ENCODE measurements at regions of chr2 and their contacts with region 1.

Region 1: DNA sequence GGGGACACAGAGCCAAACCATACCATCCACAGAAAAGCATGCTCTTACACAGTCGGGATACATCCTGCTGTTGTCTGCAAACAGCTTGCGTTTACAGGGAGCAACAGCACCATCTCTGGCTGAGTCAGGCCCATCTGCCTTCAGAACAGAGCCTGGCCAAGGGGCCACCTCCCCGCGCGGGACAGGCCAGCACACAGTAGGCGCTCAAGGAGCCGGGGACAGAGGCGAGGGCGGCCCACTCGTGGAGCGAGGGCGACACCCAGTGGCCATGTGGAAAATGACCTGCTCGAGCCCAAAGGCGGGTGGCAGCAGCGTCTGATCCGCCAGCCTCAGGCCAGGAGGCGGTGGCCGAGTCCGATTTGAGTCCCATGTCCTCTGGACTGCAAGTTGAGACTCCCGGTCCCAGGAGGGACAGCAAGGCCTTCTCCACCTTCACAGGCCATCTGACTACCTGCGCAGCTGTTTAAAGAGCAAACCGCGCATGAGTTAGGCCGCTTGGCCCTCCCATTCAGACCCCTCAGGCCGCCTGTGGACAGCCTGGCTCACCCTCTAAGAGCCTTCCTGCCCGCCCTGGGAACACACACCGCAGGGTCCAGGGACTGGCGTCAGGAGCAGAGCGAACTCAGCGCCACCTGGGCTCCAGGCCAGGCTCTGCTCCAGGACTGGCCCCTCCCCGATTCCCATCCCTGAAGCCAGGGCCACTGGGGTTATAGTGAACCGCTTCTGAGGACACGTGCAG is 38.3 kb downstream of the TTC32 start:
- DNase-seq: peak; percentile 54 to 96 (median 80)

Region 2: DNA sequence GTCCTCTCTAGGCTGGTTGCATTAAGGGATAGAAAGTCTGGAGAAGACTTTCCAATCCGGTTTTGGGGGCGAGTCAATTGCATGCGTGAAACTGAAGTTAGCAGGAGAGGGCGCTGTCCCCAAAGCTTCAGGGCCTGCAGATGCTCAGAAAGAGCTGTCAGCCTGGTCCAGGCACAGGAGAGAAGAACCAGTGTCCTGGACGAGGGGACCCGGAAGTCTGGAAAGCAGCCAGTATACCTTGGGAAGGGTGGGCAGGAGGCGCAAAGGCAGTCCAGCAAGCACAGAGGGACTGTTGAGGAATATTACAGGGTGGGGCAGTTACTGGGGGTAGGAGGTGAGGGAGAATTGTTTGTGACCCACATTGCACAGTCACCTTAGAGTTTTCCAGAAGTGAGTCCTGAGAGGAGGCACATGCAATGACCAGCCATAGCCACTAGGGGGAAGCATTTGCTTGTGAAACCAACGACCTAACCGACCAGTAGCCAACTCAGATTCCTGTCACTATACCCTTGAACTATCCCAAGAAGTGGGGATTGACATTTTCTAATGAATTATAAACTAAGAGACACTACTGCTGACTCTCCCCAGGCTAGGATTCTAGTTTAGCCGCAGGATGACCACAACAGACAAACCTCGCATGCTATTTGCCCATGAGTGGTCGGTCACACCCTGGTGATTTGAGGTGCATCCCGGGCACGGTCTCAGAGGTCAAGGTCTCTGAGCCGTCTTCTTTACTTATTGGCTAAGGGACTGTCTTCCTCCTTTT is 1475.8 kb before region 1 on chr2:
- intact Hi-C with region 1: loop called (anchors 5 kb)
- DNase-seq: peak; percentile 47 to 95 (median 82)

Region 3: GRCh38 chr2:18520451-18521425 is 1342.7 kb before region 1 on chr2:
- intact Hi-C with region 1: loop called (anchors 1 kb)
- DNase-seq: peak; percentile 56 to 97 (median 84)

Region 4: GRCh38 chr2:18749912-18750526 is 1113.5 kb before region 1 on chr2:
- intact Hi-C with region 1: loop called (anchors 5 kb)
- DNase-seq: peak in 5 of 10 donors; percentile 16 to 63 (median 56)

Region 5: DNA sequence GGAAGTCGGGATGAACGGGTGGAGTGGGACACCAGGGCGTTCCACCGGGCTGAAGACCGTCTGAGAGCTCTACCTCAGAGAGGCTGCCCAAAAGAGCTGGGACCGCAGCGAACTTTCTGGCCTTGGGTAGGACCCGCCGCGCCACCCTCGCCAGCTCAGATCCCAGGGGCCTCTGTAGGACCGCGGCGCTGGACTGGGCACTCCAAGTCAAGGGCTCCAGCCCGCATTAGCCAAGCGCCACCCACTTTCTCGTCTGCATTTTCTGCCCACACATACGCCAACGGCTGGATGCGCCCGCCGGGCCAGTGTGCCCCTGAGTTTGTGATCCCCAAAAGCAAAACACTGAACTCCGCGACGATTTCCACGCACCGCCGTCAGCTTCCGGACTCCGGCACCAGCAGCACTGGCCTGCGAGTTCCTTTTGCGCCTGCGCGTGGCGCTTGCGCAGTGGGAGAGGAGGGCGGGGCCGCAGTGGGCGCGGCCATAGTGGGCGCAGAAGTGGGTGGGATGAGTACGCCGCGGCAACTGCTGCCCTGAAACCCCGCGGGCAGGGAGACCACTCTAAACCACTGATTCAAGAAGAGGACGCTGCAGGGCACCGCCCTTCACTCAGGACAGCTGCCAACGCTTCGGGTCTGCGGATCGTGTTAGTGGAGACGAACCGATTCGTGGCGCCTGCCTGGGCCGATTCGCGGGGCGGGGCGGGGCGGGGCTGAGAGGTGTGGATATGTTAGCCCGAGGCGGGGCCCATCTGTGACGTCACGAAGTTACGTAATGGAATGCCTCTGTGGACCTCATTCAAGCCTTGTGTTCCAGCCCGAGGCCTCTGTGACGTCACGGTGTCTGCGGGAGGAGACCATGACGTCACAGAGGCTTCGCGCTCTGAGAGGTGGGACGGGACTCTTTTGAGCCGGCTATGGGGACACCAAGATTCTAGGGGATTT is 515.6 kb before region 1 on chr2:
- intact Hi-C with region 1: loop called (anchors 5 kb)
- DNase-seq: peak; percentile 88 to 99 (median 90)

Region 6: GRCh38 chr2:19801367-19802080 is 61.9 kb before region 1 on chr2:
- intact Hi-C with region 1: no loop called
- DNase-seq: peak in 1 of 10 donors; percentile 70

Region 7: DNA sequence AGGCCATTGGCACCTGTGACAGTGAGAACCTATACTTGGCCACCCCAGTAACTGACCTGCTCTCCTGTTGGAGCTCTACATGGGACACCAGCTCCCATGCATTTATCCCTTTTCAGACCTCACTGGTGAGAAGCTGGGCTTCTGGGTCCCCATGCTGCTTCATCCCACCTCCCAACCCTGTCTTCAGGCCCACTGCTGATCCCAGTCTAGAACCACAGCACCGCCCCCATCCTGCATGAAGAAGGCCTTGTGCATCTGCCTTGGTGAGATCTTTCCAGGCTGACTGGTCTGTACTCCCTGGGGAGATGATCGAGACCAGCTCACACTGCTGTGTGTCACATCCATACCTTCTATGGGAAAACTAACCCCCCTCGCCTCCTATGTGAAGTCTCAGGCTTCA is 15.6 kb after region 1 on chr2:
- intact Hi-C with region 1: no loop called
- DNase-seq: no peak

Measured in posterior cingulate gyrus (tissue), 11 donors.